ENCODE measurements at regions of chr22 and their contacts with region 1.

Region 1: GRCh38 chr22:32265882-32266767 is 11.0 kb upstream of the SLC5A4 start:
- DNase-seq: peak; percentile 58 to 64
- H3K4me3 ChIP-seq: no peak overlapping the region
- H3K4me3 Mint-ChIP-seq: no peak overlapping the region
- H3K27ac Mint-ChIP-seq: no peak overlapping the region
- H3K4me1 ChIP-seq: no peaks in the 10 kb centered on the region
- H3K4me1 Mint-ChIP-seq: no peaks in the 10 kb centered on the region
- H3K27me3 ChIP-seq: no peaks in the 10 kb centered on the region; the same call in 1 of the 2 replicates
- H3K27me3 Mint-ChIP-seq: peaks cover under 1% of the 10 kb centered on the region
- CTCF ChIP-seq: peak; percentile 80 to 87

Region 2: GRCh38 chr22:31977141-31977841 is 288.8 kb before region 1 on chr22:
- CTCF ChIA-PET with region 1: no interaction called
- POLR2A ChIA-PET with region 1: no interaction called
- intact Hi-C with region 1: loop called (anchors 1 kb)
- DNase-seq: peak; percentile 84 to 85
- H3K4me3 ChIP-seq: no peak overlapping the region
- H3K4me3 Mint-ChIP-seq: no peak overlapping the region
- H3K27ac Mint-ChIP-seq: no peak overlapping the region
- H3K4me1 ChIP-seq: no peaks in the 10 kb centered on the region
- H3K4me1 Mint-ChIP-seq: no peaks in the 10 kb centered on the region
- H3K27me3 ChIP-seq: no peaks in the 10 kb centered on the region
- H3K27me3 Mint-ChIP-seq: no peaks in the 10 kb centered on the region
- CTCF ChIP-seq: peak; percentile 60 to 88

Region 3: DNA sequence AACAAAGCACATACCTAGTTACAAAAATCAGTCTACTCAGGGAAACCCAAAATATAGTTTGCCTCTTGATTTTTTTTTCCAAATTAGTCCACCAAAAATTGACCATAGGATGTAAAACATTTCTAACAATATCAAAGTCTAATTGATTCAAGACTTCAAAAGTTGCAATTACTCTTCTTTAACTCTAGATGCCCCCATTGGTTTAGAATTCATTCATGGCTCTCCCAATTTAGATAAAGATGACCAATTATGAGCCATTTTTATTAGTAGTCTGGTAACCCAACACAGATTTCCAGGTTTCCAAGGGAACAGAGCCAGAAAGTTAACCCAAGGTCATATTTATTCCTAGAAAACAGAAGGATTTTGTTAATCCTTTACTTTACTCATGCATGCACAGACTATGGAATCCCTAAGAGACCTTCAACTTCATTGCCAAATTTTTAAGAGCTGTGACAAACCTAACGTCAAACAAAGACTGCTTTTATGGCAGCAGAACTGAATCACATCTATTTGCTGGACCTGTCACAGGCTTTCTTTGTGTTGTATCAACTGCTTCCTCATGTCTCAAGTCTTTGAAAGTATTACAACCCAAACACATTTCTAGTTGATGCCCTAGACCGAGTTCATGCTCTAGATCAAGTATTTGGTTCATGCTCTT is 162.3 kb before region 1 on chr22:
- CTCF ChIA-PET with region 1: interaction called, 3 read pairs
- POLR2A ChIA-PET with region 1: no interaction called
- intact Hi-C with region 1: loop called (anchors 5 kb)
- DNase-seq: no peak
- H3K4me3 ChIP-seq: no peak overlapping the region
- H3K4me3 Mint-ChIP-seq: no peak overlapping the region
- H3K27ac Mint-ChIP-seq: no peak overlapping the region
- H3K4me1 ChIP-seq: no peaks in the 10 kb centered on the region
- H3K4me1 Mint-ChIP-seq: no peaks in the 10 kb centered on the region
- H3K27me3 ChIP-seq: no peaks in the 10 kb centered on the region
- H3K27me3 Mint-ChIP-seq: peaks cover 10% of the 10 kb centered on the region
- CTCF ChIP-seq: peak; percentile 18 to 26

Region 4: DNA sequence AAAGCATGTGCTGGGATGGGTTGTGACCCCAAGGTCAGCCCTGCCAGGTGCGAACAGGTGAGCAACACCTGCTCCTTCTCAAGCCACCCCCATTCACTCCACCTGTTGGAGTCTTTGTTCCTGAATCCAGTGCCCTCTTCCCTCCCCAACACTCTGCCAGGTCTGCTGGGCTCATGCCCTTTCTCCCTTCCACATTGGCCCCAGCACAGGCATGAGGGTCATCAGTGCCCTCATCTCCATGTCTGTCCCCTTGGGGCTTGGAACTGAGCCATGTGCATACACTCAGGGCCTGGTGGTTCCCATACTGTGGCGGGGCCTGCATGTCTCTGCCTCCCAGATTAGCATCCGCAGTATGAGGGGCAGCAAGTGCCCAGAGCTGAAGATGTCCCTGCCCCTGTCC is 80.3 kb before region 1 on chr22:
- CTCF ChIA-PET with region 1: no interaction called
- POLR2A ChIA-PET with region 1: no interaction called
- intact Hi-C with region 1: no loop called
- DNase-seq: no peak
- H3K4me3 ChIP-seq: no peak overlapping the region
- H3K4me3 Mint-ChIP-seq: no peak overlapping the region
- H3K27ac Mint-ChIP-seq: no peak overlapping the region
- H3K4me1 ChIP-seq: no peaks in the 10 kb centered on the region
- H3K4me1 Mint-ChIP-seq: no peaks in the 10 kb centered on the region
- H3K27me3 ChIP-seq: no peaks in the 10 kb centered on the region
- H3K27me3 Mint-ChIP-seq: peaks cover 3% of the 10 kb centered on the region
- CTCF ChIP-seq: no peak

Region 5: DNA sequence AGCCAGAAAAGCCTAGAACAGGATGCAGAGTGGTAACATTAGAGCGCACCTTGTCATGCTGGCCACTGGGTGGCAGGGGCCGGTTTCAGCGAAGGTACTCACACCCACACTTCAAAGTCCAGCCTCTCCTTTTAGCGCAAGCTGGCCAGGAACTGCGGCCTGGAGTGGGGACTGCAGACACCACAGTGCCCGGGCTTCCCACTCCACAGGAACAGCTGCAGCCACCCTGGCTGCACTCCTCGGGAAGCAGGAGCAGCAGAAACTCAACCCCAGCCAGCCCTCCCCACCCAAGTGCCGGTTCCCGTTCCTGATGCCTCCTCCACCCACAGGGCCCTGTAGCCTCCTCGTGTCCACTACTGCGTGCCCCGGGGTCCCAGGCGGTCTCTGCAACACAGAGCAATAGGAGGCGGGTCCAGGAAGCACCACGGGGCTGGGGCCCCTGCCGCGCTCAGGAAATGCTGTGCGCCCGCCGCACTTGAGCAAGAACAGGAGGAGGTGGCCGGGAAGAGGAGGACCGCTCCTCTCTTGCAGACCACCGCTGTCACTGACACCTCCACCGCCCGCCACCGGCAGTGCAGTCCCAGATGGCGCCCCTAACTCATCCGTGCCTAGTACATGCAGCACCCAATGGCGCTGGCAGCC is 63.5 kb before region 1 on chr22:
- CTCF ChIA-PET with region 1: interaction called, 32 read pairs
- POLR2A ChIA-PET with region 1: no interaction called
- intact Hi-C with region 1: loop called (anchors 1 kb)
- DNase-seq: peak; percentile 77 to 80
- H3K4me3 ChIP-seq: 0 out of 2 replicates have a peak overlapping the region, but pooled peaks have one; percentile 3
- H3K4me3 Mint-ChIP-seq: no peak overlapping the region
- H3K27ac Mint-ChIP-seq: no peak overlapping the region
- H3K4me1 ChIP-seq: no peaks in the 10 kb centered on the region
- H3K4me1 Mint-ChIP-seq: peaks cover 10% of the 10 kb centered on the region
- H3K27me3 ChIP-seq: no peaks in the 10 kb centered on the region
- H3K27me3 Mint-ChIP-seq: no peaks in the 10 kb centered on the region
- CTCF ChIP-seq: peak; percentile 66 to 83

Region 6: DNA sequence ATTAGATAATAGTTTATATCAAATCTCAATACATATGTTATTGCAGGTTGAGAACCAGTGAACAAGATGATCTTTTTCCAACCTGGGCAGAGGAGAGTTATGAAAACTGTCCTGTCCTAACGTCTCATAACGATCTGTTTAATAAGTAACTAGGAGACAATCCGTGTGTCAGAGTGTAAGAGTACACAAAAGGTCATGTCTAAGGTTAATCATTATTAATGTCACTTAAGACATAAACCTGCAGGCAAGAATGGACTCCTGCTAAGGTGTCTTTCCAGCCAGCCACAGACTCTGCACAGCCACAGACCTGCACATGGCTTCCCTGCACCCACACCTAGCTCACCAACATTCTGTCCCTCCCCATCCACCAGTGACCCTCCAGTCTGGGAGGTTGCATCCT is 21.1 kb before region 1 on chr22:
- CTCF ChIA-PET with region 1: interaction called, 4 read pairs
- POLR2A ChIA-PET with region 1: no interaction called
- intact Hi-C with region 1: loop called (anchors 2 kb)
- DNase-seq: peak in 1 of 2 experiments; percentile 29
- H3K4me3 ChIP-seq: no peak overlapping the region
- H3K4me3 Mint-ChIP-seq: no peak overlapping the region
- H3K27ac Mint-ChIP-seq: no peak overlapping the region
- H3K4me1 ChIP-seq: peaks cover 21% of the 10 kb centered on the region; the same call in 1 of the 2 replicates
- H3K4me1 Mint-ChIP-seq: peaks cover 8% of the 10 kb centered on the region
- H3K27me3 ChIP-seq: no peaks in the 10 kb centered on the region
- H3K27me3 Mint-ChIP-seq: no peaks in the 10 kb centered on the region
- CTCF ChIP-seq: no peak

Measured in Caco-2 (cell line).